Right lobe of liver (tissue), 6 donors: ENCODE measurements at regions of chr1 and their contacts with region 1.

Region 1: DNA sequence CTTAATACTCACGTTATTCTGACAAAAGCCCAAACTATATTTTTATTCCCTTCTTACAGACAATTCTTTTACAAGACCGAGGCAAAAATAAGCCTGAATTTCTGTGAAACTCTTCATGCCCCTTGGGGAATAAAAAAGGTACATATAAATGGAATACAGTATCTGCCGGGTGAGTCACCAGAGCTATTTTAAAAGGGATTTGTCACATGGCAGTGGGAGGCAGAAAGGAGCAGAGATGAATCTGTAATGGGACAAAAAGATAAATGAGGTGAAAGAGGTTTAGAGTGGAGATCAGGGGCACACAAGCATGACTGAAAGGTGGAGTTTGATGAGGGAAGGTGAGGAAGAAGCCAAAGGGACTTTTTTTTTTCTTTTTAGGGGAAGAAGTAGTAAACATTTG is 8.8 kb downstream of the XCL1 start:
- DNase-seq: no peak
- ATAC-seq: no peak
- H3K4me3 ChIP-seq: no peak overlapping the region
- H3K27ac ChIP-seq: no peak overlapping the region
- H3K4me1 ChIP-seq: no peaks in the 10 kb centered on the region
- H3K27me3 ChIP-seq: no peaks in the 10 kb centered on the region
- CTCF ChIP-seq: no peak
- POLR2A ChIP-seq: no peak

Region 2: GRCh38 chr1:168439456-168440375 is 145.5 kb before region 1 on chr1:
- intact Hi-C with region 1: loop called in 1 of 2 experiments (anchors 10 kb)
- DNase-seq: peak in 2 of 3 donors; percentile 31 to 60
- ATAC-seq: peak; percentile 79 to 90 (median 84)
- H3K4me3 ChIP-seq: no peak overlapping the region
- H3K27ac ChIP-seq: no peak overlapping the region
- H3K4me1 ChIP-seq: no peaks in the 10 kb centered on the region
- H3K27me3 ChIP-seq: no peaks in the 10 kb centered on the region
- CTCF ChIP-seq: peak; percentile 57 to 75 (median 67)
- POLR2A ChIP-seq: no peak

Region 3: DNA sequence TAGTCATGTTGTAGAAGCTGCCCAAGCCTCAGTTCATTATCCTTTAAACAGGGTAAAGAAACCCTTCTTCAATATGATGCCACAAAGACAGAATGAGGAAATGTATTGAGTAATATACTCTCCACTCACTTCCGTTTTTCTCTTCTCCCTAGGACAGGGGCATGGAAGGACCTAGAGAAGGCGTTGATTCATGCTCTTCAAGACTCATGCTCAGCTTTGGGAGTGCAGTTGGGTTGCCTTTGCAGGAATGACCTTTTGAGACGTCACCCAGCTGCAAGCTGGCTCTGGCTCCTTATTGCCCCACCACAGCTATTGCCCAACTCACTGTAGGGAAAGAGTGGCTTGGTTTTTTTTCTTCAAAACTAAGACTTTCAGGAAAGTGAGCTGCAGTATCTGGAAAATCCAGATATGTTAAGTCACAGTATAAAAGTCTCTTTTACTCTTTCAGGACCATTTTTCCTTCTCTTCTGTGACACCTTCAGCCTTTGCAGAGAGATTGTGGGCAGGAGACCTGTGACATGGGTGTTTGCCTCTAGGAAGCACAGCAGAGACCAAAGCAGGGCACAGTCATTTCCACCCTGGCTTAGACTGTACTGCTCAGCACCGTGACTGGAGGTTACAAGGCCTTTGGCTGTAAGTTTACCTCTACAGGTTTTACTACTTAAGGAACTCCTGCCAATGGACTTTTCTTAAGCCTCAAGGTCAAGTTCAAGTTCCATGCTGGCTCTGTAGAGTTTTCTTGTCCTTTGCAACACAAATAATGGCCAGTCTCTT is 80.9 kb before region 1 on chr1:
- intact Hi-C with region 1: no loop called
- DNase-seq: peak; percentile 49 to 77 (median 76)
- ATAC-seq: peak; percentile 86 to 95 (median 93)
- H3K4me3 ChIP-seq: no peak overlapping the region
- H3K27ac ChIP-seq: no peak overlapping the region
- H3K4me1 ChIP-seq: peaks cover 0 to 9% (median 0%) of the 10 kb centered on the region in 4 donors
- H3K27me3 ChIP-seq: no peaks in the 10 kb centered on the region
- CTCF ChIP-seq: no peak
- POLR2A ChIP-seq: no peak